ENCODE measurements at regions of chr17 and their contacts with region 1.

Region 1: DNA sequence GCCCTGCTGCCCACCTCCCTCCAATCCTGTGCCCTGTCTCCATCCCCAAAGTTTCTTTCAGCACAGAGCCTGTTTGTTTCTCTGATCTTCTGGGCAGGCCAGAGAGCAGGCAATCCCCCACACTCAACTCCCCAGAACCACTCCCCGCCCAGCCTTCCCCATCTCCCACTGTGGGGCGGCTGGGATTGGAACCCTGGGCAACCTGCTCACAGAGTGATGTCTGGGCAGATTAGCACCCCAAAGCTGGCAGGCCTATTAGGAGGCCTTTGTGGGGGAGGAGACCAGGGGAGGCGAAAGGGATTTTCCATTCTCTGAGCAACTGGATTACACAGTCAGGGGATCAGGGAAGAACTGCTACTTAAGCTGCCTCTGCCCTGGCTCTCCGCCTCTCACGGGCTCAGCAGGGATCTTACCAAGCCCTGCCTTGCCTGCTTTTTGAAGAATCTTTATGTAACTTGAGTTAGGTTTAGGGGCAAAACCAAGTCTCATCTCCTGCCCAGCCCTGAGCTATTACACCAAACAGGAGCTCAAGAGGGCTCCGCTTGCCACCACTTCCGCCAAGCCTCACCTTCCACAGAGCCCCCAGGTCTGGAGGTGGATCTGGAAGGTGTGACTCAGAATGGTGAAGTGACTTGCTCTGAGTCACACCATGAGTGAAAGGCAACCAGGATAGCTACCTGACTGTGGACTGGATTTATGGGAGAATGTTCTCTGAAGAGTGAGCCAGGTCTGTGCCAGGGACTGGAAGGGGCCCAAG is 16.0 kb upstream of the LHX1 start:
- DNase-seq: peak; percentile 85 to 99
- H3K4me3 ChIP-seq: peak overlapping the region; percentile 45
- H3K27ac ChIP-seq: peak overlapping the region; percentile 99
- H3K4me1 ChIP-seq: peaks cover 93% of the 10 kb centered on the region
- H3K27me3 ChIP-seq: no peaks in the 10 kb centered on the region
- CTCF ChIP-seq: no peak

Region 2: DNA sequence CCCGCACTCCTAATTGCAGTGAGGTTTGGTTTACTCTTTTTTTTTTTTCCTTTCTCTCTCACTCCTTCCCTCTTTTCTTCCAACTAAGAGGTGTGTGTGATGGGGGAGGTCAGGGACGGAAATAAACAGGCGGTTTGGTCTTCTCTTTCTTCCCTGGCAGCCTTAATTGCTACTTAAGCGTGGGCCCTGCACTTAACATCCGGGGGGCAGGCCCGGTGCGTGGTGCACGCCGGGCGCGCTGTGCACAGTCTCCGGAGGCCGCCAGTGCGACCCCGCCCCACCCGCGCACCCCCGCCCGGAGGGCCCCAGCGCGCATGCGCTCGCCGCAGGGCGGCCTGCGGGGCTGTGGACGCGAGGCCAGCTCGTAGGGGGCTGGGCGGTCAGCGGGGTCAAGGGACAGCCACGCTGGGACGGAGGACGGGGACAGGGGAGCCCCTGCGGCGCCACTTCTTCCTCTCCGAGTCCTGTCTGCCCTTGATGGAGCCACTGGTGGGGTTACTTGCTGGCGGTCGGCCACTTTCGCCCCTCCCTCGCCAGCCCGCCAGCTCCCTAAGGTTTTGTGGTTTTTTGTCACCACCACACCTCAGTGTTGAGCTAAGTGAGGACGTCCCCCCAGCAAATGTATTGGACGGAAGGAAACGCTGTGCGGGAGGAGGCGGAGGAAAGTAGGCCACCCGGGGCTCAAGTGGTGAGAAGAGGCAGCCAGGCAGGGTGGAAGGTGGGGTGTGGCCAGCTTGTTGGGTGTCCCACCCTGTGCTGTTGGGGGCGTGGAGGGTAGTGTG is 199.0 kb before region 1 on chr17:
- CTCF ChIA-PET with region 1: no interaction called
- POLR2A ChIA-PET with region 1: no interaction called
- intact Hi-C with region 1: loop called (anchors 1 kb)
- DNase-seq: peak in 1 of 2 experiments; percentile 79
- H3K4me3 ChIP-seq: no peak overlapping the region
- H3K27ac ChIP-seq: no peak overlapping the region
- H3K4me1 ChIP-seq: no peaks in the 10 kb centered on the region
- H3K27me3 ChIP-seq: peaks cover 43% of the 10 kb centered on the region
- CTCF ChIP-seq: no peak

Region 3: DNA sequence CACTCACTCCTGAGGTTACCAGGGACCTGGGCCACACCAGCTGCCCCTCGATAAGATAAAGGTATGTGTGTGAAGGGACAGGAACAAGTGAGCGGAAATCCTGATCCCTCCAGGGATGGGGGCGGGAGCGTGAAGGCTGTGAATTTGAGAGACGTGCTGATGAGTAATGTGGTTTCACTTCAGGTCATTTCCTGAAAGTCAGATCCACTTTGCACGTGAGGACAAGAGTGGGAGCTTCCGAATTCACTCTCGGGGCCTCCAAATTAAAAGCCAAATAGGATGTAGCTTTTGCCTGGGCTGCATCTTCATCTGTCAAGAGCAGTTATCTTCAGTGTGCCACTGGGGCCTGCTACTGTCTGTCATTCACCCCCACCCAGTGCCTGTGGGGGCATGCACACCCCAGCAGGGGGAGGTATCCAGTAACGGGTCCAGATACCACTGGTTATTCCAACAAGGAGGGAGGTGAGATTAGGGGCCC is 71.4 kb before region 1 on chr17:
- CTCF ChIA-PET with region 1: no interaction called
- POLR2A ChIA-PET with region 1: no interaction called
- intact Hi-C with region 1: loop called (anchors 5 kb)
- DNase-seq: peak in 1 of 2 experiments; percentile 54
- H3K4me3 ChIP-seq: no peak overlapping the region
- H3K27ac ChIP-seq: peak overlapping the region; percentile 57
- H3K4me1 ChIP-seq: peaks cover 26% of the 10 kb centered on the region
- H3K27me3 ChIP-seq: peaks cover 2% of the 10 kb centered on the region; the same call in 1 of the 2 replicates
- CTCF ChIP-seq: peak; percentile 40

Region 4: DNA sequence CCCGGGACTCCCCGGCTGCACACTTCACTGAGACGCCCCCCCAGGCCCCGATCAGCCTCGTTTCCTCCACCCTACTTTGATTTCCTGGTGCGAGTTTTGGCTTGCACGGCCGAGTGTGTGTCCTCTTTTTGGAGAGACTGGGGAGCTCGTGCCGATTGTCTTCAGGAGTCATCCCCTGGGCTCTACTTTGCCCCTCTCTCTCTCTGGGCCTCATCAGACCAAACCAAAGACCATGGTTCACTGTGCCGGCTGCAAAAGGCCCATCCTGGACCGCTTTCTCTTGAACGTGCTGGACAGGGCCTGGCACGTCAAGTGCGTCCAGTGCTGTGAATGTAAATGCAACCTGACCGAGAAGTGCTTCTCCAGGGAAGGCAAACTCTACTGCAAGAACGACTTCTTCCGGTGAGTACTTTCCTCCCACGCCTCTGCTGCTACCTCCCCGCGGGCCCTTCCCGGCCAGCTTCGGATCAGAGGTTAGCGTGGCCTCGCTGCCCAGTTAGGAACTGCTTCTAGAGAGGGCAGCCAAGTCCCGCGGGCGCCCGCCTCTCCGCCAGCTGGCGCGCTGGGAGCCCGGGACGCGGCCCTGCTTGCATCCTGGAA is 16.8 kb after region 1 on chr17:
- CTCF ChIA-PET with region 1: interaction called, 3 read pairs
- POLR2A ChIA-PET with region 1: interaction called, 3 read pairs
- intact Hi-C with region 1: loop called (anchors 1 kb)
- DNase-seq: peak; percentile 53 to 68
- H3K4me3 ChIP-seq: peak overlapping the region; percentile 82
- H3K27ac ChIP-seq: 0 out of 2 replicates have a peak overlapping the region, but pooled peaks have one; percentile 8
- H3K4me1 ChIP-seq: peaks cover 14% of the 10 kb centered on the region
- H3K27me3 ChIP-seq: no peaks in the 10 kb centered on the region
- CTCF ChIP-seq: no peak

Region 5: GRCh38 chr17:36999471-36999870 is 78.2 kb after region 1 on chr17:
- CTCF ChIA-PET with region 1: no interaction called
- POLR2A ChIA-PET with region 1: interaction called, 13 read pairs
- intact Hi-C with region 1: no loop called
- DNase-seq: no peak
- H3K4me3 ChIP-seq: no peak overlapping the region
- H3K27ac ChIP-seq: no peak overlapping the region
- H3K4me1 ChIP-seq: no peaks in the 10 kb centered on the region
- H3K27me3 ChIP-seq: no peaks in the 10 kb centered on the region
- CTCF ChIP-seq: no peak

Measured in PC-9 (cell line).